Head of caudate nucleus (tissue), 42 donors: ENCODE measurements at regions of chr12 and their contacts with region 1.

Region 1: DNA sequence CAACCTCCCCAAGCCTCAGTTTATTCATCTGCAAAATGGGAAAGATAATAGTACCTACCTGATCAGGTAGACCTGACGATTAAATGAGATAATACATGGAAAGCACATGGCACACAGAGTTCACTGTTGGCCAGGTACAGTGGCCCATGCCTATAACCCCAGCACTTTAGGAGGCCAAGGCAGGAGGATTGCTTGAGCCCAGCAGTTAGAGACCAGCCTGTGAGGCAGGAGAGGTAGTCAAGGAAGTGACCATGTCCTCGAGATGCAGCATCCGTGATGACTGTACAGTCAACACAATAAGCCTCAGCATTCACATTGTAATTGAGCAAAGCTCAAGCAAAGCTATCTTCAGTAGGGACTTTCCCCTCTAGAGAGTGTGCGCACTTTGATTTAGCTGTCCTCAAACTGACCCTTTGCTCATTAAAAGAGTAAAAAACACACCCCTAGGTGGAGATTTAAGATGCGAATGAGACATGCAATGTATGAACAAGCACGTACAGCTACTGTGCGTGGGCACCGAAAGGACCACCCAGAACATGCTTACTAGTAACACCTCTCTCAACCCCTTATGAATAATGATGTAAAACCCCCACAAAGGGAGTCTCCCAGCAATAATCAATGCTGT is 9.9 kb downstream of the ISCU start:
- DNase-seq: no peak

Region 2: DNA sequence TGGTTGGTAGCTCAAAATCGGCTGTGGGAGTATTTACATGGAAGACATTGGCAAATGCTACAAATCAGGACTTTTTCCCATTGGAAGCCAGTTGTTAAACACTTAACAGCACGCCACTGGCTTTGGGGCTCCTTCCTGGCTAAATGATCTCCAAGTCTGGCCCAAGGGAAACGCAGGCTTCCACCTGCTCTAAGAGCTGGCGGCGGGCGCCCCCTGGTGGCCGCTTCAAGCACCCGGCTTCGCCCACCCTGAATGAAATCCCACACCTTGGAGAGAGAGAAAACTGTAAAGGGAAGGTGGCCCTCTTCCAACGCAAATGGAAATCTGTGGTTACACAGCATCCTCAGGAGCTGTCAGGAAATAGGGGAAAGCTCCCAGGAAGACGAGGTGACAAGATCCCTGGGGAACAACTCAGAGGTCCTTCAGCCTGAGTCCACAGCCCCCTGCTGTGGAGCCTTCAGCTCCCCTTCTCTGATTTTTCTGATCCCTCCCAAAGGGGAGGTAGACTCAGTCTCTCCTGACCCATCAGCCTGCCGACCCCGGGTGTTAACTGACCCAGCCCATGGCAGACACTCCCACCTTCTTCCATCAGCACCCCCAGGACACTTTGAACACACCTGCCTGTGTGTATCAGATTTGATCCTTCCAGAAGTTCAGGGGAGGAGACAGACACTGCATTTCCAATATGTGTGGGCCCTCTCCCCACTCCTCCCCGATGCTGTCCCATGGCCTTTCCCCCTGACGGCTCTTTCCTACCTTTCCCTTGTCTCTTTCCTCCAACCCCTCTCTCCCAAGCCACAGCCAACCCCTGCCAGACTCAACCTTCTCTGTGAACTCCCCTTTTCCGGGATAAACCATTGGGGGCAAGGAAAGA is 46.0 kb after region 1 on chr12:
- intact Hi-C with region 1: loop called (anchors 2 kb)
- DNase-seq: peak; percentile 63 to 92 (median 84)